ENCODE measurements at regions of chr3 and their contacts with region 1.

Region 1: DNA sequence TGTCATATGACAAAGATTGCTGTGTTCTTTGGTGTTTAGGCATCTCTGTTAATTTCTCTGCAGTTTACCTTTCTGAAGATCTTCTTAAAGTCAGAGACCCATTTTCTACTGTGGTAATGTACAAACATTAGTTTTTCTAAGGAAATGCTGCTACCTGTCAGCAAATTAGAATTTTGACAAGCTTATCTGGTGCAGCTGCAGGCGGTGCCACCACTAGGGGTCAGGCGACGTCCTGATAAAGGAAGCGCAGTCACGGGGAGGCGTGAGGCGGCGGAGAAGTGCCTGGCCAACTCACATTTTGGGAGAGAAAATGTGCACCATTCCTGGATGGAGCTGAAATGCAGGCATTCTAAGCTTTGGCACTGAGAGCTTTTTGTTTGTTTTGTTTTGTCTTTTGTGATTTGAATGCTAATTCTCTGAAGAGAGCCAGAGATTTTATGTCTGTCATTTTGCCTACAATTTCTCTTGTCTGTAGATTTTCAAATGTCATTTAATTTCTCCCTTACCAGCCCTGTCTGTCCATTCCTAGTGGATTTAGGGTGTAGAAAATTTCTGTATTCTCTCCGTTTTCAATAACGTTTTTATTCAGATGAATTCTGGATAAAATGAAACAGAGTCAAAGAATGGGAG is 24.9 kb upstream of the SIAH2 start:
- DNase-seq: peak; percentile 93
- H3K4me3 Mint-ChIP-seq: no peak overlapping the region
- H3K27ac Mint-ChIP-seq: no peak overlapping the region
- H3K4me1 Mint-ChIP-seq: peaks cover 49% of the 10 kb centered on the region
- H3K27me3 Mint-ChIP-seq: peaks cover 6% of the 10 kb centered on the region

Region 2: DNA sequence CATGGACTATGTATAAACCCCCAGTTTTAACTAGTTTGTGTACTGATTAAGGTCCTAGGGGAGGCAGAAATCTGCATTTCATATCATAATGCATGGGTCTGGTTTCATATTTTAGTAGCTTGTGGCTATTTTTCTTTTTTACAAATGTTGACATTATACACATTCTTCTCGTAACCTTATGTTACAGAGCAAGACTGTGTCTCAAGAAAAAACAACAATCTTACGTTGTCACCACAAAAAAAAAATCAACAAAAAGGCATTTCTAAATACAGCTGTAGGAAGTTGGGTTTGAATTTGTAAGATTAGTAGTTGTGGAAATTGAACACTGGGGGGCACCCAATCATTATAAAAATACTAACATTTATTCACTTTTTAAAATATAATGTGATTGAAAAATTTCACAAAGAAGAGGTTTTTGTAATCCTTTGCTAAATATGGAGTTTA is 259.5 kb before region 1 on chr3:
- CTCF ChIA-PET with region 1: interaction called, 6 read pairs
- intact Hi-C with region 1: loop called (anchors 2 kb)
- DNase-seq: no peak
- H3K4me3 Mint-ChIP-seq: no peak overlapping the region
- H3K27ac Mint-ChIP-seq: no peak overlapping the region
- H3K4me1 Mint-ChIP-seq: peaks cover 8% of the 10 kb centered on the region
- H3K27me3 Mint-ChIP-seq: no peaks in the 10 kb centered on the region

Region 3: GRCh38 chr3:150610790-150611189 is 177.1 kb before region 1 on chr3:
- CTCF ChIA-PET with region 1: no interaction called
- intact Hi-C with region 1: loop called (anchors 5 kb)
- DNase-seq: no peak
- H3K4me3 Mint-ChIP-seq: no peak overlapping the region
- H3K27ac Mint-ChIP-seq: no peak overlapping the region
- H3K4me1 Mint-ChIP-seq: peaks cover 72% of the 10 kb centered on the region
- H3K27me3 Mint-ChIP-seq: no peaks in the 10 kb centered on the region

Region 4: GRCh38 chr3:150721285-150722130 is 66.3 kb before region 1 on chr3:
- CTCF ChIA-PET with region 1: interaction called, 32 read pairs
- intact Hi-C with region 1: loop called (anchors 1 kb)
- DNase-seq: no peak
- H3K4me3 Mint-ChIP-seq: no peak overlapping the region
- H3K27ac Mint-ChIP-seq: no peak overlapping the region
- H3K4me1 Mint-ChIP-seq: peaks cover 28% of the 10 kb centered on the region
- H3K27me3 Mint-ChIP-seq: no peaks in the 10 kb centered on the region

Region 5: GRCh38 chr3:150870396-150870795 is 82.5 kb after region 1 on chr3:
- CTCF ChIA-PET with region 1: interaction called, 47 read pairs
- intact Hi-C with region 1: loop called (anchors 1 kb)
- DNase-seq: no peak
- H3K4me3 Mint-ChIP-seq: no peak overlapping the region
- H3K27ac Mint-ChIP-seq: no peak overlapping the region
- H3K4me1 Mint-ChIP-seq: no peaks in the 10 kb centered on the region
- H3K27me3 Mint-ChIP-seq: peaks cover 6% of the 10 kb centered on the region

Region 6: GRCh38 chr3:151146071-151146730 is 358.3 kb after region 1 on chr3:
- CTCF ChIA-PET with region 1: interaction called, 4 read pairs
- intact Hi-C with region 1: loop called (anchors 1 kb)
- DNase-seq: peak; percentile 77
- H3K4me3 Mint-ChIP-seq: no peak overlapping the region
- H3K27ac Mint-ChIP-seq: no peak overlapping the region
- H3K4me1 Mint-ChIP-seq: no peaks in the 10 kb centered on the region
- H3K27me3 Mint-ChIP-seq: no peaks in the 10 kb centered on the region

Region 7: GRCh38 chr3:151276687-151277042 is 488.8 kb after region 1 on chr3:
- CTCF ChIA-PET with region 1: no interaction called
- intact Hi-C with region 1: loop called (anchors 5 kb)
- DNase-seq: peak; percentile 77
- H3K4me3 Mint-ChIP-seq: peak overlapping the region; percentile 55
- H3K27ac Mint-ChIP-seq: peak overlapping the region; percentile 85
- H3K4me1 Mint-ChIP-seq: peaks cover 39% of the 10 kb centered on the region
- H3K27me3 Mint-ChIP-seq: no peaks in the 10 kb centered on the region